Sigmoid colon (tissue), 7 donors: ENCODE measurements at regions of chr9 and their contacts with region 1.

Region 1: DNA sequence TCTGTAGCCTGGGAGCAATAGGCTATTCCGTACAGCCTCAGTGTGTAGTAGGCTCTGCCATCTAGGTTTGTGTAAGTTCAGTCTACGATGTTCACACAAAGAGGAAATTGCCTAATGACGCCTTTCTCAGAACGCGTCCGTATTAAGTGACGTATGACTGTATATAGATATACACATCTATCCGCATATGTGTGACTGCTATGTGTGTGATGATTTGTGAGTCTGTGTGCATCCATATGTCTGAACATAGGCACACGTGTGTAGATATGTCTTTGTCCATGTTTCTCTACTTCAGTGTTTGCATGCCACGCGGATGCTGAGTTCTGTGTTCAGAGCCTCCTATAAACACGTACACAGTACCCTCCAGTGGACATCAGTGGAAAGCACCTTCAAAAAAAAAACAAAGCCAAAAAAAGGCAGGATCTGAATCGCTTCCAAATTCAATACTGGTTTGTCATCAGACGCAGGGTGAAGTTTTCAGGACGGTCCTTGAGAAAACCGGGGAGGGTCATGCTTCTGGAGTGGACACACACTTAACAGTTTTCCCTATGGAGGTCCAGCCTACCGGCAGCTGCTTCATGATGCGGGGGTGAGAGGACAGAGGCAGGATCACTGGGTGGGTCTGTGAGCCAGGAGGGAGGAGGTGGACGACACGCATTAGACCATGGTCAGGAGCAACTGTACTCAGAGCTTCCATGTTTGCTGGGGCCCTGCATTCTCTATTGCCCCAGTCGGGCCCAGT is 29.5 kb upstream of the ALDH1B1 start:
- DNase-seq: no peak
- H3K4me3 ChIP-seq: peak overlapping the region in 1 of 4 donors; percentile 21
- H3K27ac ChIP-seq: peak overlapping the region in 1 of 4 donors; percentile 57
- H3K4me1 ChIP-seq: peaks cover 0 to 13% (median 8%) of the 10 kb centered on the region in 4 donors
- H3K27me3 ChIP-seq: no peaks in the 10 kb centered on the region
- CTCF ChIP-seq: peak; percentile 15 to 52 (median 39)
- EP300 ChIP-seq: no peak
- POLR2A ChIP-seq: no peak

Region 2: DNA sequence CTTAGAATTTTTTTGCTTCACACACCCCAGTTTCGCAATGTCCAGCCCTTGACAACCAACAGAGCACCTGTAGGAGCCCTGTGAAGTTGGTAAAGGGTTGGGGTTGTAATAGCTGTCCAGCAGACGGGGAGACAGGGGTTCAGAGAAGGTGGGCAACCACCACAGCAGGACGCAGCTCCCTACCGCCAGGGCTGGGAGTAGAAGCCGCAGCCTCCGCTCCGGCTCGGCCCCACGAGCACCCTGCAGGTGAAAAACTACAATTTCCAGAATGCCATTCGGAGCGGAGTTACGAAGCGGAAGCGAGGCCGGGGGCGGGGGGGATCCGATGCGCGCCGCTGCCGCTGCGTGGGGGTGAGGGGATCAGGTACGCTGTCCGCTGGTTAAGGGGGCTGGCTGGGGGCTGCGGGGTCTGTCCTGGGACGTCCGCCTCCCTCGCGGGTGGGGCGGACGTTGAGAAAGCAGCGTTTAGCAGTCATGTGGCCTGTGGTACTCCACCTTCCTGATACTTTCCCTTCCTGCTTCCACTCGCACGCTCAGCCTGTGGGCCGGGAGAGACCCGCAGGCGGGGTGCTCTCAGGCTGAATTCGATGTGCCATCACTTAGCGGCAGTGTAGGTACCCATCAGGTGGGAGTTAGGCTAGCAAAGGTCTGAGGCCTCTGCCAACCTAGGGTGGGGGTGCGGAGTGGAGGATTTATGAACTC is 609.4 kb before region 1 on chr9 and contains the start of gene TRMT10B:
- intact Hi-C with region 1: loop called (anchors 10 kb)
- DNase-seq: peak; percentile 75
- H3K4me3 ChIP-seq: peak within 1 kb of the TSS; percentile 67 to 80 (median 68)
- H3K27ac ChIP-seq: peak within 1 kb of the TSS; percentile 79 to 86 (median 81)
- H3K4me1 ChIP-seq: peaks cover 0 to 10% (median 7%) of the 10 kb centered on the region in 4 donors
- H3K27me3 ChIP-seq: no peaks in the 10 kb centered on the region
- CTCF ChIP-seq: peak in 2 of 4 experiments; percentile 20 to 21
- EP300 ChIP-seq: no peak
- POLR2A ChIP-seq: peak; percentile 8 to 14
- total RNA-seq, gene TRMT10B: 5.3 to 9.7 (median 7.9) TPM

Region 3: DNA sequence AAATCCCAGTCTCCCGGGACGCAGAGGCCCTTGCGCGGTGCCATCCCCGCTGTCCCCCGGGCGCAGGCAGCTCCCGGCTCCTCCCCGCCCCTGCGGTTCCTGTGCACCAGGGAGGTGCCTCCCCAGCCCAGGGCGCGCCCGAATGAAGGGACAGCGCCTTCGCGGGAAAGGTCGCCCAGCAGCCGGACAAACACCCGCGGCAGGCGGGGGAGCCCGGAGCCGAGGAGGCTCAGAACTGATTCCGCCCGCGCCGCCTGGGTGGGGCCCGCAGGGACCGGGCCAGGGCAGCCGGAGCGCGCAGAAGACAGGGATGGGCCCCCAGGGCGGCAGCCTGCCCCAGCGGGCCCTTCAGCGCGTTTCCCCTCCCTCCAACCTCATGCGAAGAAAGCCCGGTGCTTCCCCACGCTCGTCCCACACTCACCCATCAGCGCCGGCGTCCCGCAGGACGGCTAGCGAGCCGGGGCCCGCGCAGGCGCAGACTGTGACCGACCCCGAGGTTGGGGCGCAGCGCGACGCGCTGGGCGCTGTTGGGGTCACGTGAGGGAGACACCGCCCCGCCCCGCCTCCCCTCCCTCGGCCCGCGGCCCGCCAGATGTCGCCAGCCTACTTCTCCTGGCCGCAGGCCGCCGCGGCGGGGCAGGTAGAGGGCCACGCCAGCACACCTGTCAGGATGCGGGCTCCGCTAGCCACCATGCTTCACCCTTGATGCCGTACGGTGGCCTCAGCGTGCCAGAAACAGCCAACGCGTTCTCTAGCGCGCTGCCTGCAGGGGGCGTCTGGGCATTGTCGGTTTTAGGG is 459.2 kb before region 1 on chr9 and contains the start of gene SLC25A51:
- intact Hi-C with region 1: loop called (anchors 2 kb)
- DNase-seq: peak; percentile 97
- H3K4me3 ChIP-seq: peak within 1 kb of the TSS; percentile 68 to 92 (median 92)
- H3K27ac ChIP-seq: peak within 1 kb of the TSS; percentile 83 to 95 (median 92)
- H3K4me1 ChIP-seq: peaks cover 0 to 28% (median 24%) of the 10 kb centered on the region in 4 donors
- H3K27me3 ChIP-seq: no peaks in the 10 kb centered on the region
- CTCF ChIP-seq: peak; percentile 85 to 98 (median 93)
- EP300 ChIP-seq: no peak
- POLR2A ChIP-seq: peak; percentile 9 to 54
- total RNA-seq, gene SLC25A51: 19.3 to 31.0 (median 27.3) TPM

Region 4: GRCh38 chr9:37913480-37914153 is 449.4 kb before region 1 on chr9:
- intact Hi-C with region 1: loop called (anchors 1 kb)
- DNase-seq: peak; percentile 87
- H3K4me3 ChIP-seq: no peak overlapping the region
- H3K27ac ChIP-seq: peak overlapping the region in 2 of 4 donors; percentile 17 to 18
- H3K4me1 ChIP-seq: peaks cover 0 to 10% (median 2%) of the 10 kb centered on the region in 4 donors
- H3K27me3 ChIP-seq: no peaks in the 10 kb centered on the region
- CTCF ChIP-seq: peak; percentile 94 to 98 (median 96)
- EP300 ChIP-seq: no peak
- POLR2A ChIP-seq: no peak

Region 5: GRCh38 chr9:38088006-38088925 is 274.8 kb before region 1 on chr9:
- intact Hi-C with region 1: loop called (anchors 2 kb)
- DNase-seq: peak; percentile 86
- H3K4me3 ChIP-seq: no peak overlapping the region
- H3K27ac ChIP-seq: no peak overlapping the region
- H3K4me1 ChIP-seq: peaks cover 0 to 6% (median 2%) of the 10 kb centered on the region in 4 donors
- H3K27me3 ChIP-seq: no peaks in the 10 kb centered on the region
- CTCF ChIP-seq: peak; percentile 56 to 96 (median 80)
- EP300 ChIP-seq: no peak
- POLR2A ChIP-seq: no peak

Region 6: DNA sequence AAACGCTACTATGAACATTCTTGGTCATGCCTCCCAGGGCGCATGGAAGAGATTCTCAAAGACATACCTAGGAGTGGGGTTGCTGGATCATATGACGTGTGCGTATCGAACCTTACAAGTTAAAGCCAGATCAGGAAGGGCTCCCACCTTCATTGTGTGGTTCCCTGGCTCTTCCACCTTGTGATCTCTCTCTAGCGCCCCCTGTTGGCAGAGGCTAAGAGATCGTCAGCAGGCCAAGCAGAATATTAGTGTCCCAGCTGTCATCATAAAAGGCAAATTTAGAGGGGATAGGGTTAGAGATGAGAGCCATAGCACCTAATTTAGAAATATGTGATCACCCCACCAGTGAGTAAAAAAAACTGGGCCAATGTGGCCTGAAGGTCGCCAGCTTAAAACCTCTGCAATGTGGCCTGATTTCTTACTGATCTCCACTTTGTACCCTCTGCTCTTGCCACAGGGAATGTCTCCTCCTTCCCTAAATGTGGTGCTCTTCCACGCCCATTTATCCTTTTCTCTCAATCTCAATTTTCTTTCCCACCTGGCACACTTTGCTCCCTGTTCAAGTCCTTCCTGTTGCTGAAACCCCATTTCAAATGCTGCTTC is 202.3 kb before region 1 on chr9:
- intact Hi-C with region 1: loop called (anchors 5 kb)
- DNase-seq: peak; percentile 70
- H3K4me3 ChIP-seq: no peak overlapping the region
- H3K27ac ChIP-seq: no peak overlapping the region
- H3K4me1 ChIP-seq: no peaks in the 10 kb centered on the region
- H3K27me3 ChIP-seq: no peaks in the 10 kb centered on the region
- CTCF ChIP-seq: peak; percentile 37 to 77 (median 60)
- EP300 ChIP-seq: no peak
- POLR2A ChIP-seq: no peak